Activated CD4-positive, alpha-beta memory T cell treated with anti-CD3 and anti-CD28 coated beads for 36 hours (primary cell): ENCODE measurements at regions of chr17 and their contacts with region 1.

Region 1: DNA sequence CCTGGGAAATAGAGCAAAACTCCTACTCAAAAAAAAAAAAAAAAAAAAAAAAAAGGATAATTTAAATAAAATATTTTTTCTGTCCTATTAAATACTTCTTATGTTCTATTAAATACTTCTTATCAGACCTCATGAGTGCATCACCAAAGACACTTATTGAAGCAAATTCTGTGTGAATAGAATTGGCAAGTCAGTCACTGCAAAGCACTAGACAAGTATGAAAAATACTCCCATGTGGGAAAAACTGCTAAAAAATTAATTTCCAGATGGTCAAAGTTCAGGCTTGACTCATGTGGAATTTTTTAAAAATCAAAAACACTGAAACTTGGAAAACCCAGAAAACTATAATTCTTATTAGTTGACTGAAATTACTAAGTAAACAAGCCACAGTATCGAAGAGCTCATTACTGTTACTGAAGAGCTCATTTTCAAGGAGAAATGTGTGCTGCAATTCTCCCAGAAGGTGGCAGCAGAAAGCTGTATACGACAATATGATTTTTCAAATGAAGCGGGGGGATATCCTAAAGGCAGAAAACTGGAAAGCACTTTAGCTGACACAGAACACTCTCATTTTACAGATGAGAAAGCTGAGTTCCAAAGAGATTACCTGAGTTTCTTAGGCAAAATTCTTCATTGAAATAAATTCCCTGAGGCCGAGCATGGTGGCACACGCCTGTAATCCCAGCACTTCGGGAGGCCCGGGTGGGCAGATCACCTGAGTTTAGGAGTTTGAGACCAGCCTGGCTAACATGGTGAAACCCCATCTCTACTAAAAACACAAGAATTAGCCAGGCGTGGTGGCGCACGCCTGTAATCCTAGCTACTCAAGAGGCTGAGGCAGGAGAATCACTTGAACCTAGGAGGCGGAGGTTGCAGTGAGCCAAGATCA is 15.9 kb upstream of the FBXO47 start:
- DNase-seq: peak; percentile 50
- H3K4me3 Mint-ChIP-seq: no peak overlapping the region
- H3K27ac Mint-ChIP-seq: peak overlapping the region; percentile 11
- H3K4me1 Mint-ChIP-seq: peaks cover 3% of the 10 kb centered on the region
- H3K27me3 Mint-ChIP-seq: peaks cover 1% of the 10 kb centered on the region

Region 2: GRCh38 chr17:38994026-38994425 is 10.9 kb after region 1 on chr17:
- CTCF ChIA-PET with region 1: interaction called, 11 read pairs
- POLR2A ChIA-PET with region 1: no interaction called
- intact Hi-C with region 1: no loop called
- DNase-seq: no peak
- H3K4me3 Mint-ChIP-seq: no peak overlapping the region
- H3K27ac Mint-ChIP-seq: no peak overlapping the region
- H3K4me1 Mint-ChIP-seq: no peaks in the 10 kb centered on the region
- H3K27me3 Mint-ChIP-seq: peaks cover 1% of the 10 kb centered on the region

Region 3: DNA sequence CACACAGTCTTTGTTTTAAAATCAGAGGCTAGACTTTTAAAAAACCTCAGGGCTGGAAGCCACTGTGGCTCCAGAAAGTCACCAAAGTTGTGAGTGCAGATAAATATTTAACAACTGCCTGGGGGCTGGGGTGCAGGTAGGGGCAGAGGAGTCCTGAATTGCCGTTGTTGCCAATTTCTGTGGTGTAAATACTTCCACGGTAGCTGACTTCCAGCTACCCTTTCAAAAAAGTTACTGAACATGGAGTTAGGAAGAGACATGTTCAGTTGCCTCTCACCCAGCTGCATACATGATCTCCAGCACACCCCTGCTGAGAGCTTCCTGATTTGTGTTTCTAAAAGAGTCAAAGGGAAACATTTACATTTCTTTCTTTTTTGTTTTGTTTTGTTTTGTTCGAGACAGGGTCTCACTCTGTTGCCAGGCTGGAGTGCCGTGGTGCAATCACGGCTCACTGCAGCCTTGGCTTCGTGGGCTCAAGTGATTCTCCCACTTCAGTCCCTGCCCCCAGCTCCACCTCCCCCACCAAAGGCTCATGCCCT is 109.7 kb after region 1 on chr17:
- CTCF ChIA-PET with region 1: interaction called, 16 read pairs
- POLR2A ChIA-PET with region 1: no interaction called
- intact Hi-C with region 1: loop called (anchors 2 kb)
- DNase-seq: peak; percentile 13
- H3K4me3 Mint-ChIP-seq: peak overlapping the region; percentile 38
- H3K27ac Mint-ChIP-seq: peak overlapping the region; percentile 66
- H3K4me1 Mint-ChIP-seq: peaks cover 60% of the 10 kb centered on the region
- H3K27me3 Mint-ChIP-seq: no peaks in the 10 kb centered on the region

Region 4: DNA sequence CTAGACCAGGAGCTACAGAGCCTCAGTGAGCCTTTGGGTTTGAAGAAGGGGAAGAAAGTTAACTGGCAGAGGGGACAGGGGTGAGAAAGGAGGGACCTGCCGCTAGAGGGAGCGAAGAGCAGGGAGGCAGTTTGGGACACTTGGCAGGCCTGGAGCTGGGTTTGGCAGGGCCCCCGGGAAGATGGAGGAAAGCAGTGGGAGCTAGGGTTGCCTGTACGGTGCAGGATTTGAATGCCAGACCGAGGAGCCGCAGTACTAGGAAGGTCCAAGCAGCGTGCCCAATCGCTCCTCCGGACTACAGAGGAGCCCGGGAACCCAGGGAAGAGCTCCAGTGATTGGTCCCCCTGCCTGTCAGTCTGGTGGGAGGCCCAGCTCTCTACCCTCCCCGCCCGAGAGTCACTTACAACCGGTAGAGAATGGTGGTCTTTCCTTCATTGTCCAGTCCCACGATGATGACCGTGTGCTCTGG is 181.6 kb after region 1 on chr17:
- CTCF ChIA-PET with region 1: interaction called, 57 read pairs
- POLR2A ChIA-PET with region 1: no interaction called
- intact Hi-C with region 1: no loop called
- DNase-seq: peak; percentile 83
- H3K4me3 Mint-ChIP-seq: peak overlapping the region; percentile 84
- H3K27ac Mint-ChIP-seq: no peak overlapping the region
- H3K4me1 Mint-ChIP-seq: peaks cover 14% of the 10 kb centered on the region
- H3K27me3 Mint-ChIP-seq: peaks cover 37% of the 10 kb centered on the region

Region 5: DNA sequence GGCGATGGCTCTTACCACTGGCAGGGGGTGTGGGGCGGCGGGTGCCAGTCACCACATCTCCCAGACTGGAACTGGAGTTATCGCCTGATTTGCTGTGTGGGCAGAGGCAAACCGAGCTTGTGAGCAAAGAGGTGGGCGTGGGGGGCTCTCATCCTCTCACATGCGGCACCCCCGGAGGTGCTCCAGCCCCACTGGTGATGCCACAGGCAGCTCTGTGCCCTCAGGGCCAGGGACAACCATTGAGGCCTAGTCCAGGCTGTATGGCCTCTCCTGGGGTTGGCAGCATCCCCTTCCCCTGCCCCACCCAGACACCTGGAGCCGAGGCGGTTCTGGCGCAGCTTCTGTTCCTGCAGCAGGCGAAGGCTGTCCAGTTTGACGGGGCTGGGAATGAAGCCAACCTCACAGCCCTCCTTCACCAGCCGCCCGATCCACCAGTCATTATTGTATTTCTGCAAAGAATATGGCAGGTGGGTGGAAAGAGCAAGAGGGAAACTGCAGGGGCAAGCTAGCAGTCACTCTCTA is 203.4 kb after region 1 on chr17:
- CTCF ChIA-PET with region 1: no interaction called
- POLR2A ChIA-PET with region 1: no interaction called
- intact Hi-C with region 1: no loop called
- DNase-seq: no peak
- H3K4me3 Mint-ChIP-seq: no peak overlapping the region
- H3K27ac Mint-ChIP-seq: no peak overlapping the region
- H3K4me1 Mint-ChIP-seq: no peaks in the 10 kb centered on the region
- H3K27me3 Mint-ChIP-seq: no peaks in the 10 kb centered on the region

Region 6: GRCh38 chr17:39235555-39236449 is 252.7 kb after region 1 on chr17:
- CTCF ChIA-PET with region 1: interaction called, 12 read pairs
- POLR2A ChIA-PET with region 1: no interaction called
- intact Hi-C with region 1: loop called (anchors 10 kb)
- DNase-seq: peak; percentile 73
- H3K4me3 Mint-ChIP-seq: no peak overlapping the region
- H3K27ac Mint-ChIP-seq: no peak overlapping the region
- H3K4me1 Mint-ChIP-seq: peaks cover 29% of the 10 kb centered on the region
- H3K27me3 Mint-ChIP-seq: peaks cover 11% of the 10 kb centered on the region